ENCODE measurements at regions of chr1 and their contacts with region 1.

Region 1: GRCh38 chr1:28329395-28330153 is 734 bp downstream of the MED18 start:
- DNase-seq: peak; percentile 27 to 43 (median 28)
- H3K4me3 ChIP-seq: peak overlapping the region; percentile 65 to 82 (median 76)
- H3K4me3 Mint-ChIP-seq: peak overlapping the region; percentile 87 to 93
- H3K27ac ChIP-seq: peak overlapping the region; percentile 91 to 96
- H3K27ac Mint-ChIP-seq: peak overlapping the region; percentile 97 to 99 (median 98)
- H3K4me1 ChIP-seq: peaks cover 33 to 35% of the 10 kb centered on the region in 2 donors
- H3K4me1 Mint-ChIP-seq: peaks cover 35% of the 10 kb centered on the region
- H3K27me3 ChIP-seq: no peaks in the 10 kb centered on the region
- H3K27me3 Mint-ChIP-seq: peaks cover 0 to 6% (median 1%) of the 10 kb centered on the region in 3 donors
- CTCF ChIP-seq: no peak

Region 2: GRCh38 chr1:28248283-28249012 is 81.1 kb before region 1 on chr1:
- intact Hi-C with region 1: loop called (anchors 2 to 5 kb)
- DNase-seq: peak; percentile 69 to 77 (median 76)
- H3K4me3 ChIP-seq: peak overlapping the region in 2 of 3 experiments; percentile 14 to 96
- H3K4me3 Mint-ChIP-seq: peak overlapping the region; percentile 61 to 82
- H3K27ac ChIP-seq: peak overlapping the region; percentile 75 to 89
- H3K27ac Mint-ChIP-seq: peak overlapping the region; percentile 94 to 99 (median 96)
- H3K4me1 ChIP-seq: peaks cover 66 to 69% of the 10 kb centered on the region in 2 donors
- H3K4me1 Mint-ChIP-seq: peaks cover 63% of the 10 kb centered on the region
- H3K27me3 ChIP-seq: no peaks in the 10 kb centered on the region
- H3K27me3 Mint-ChIP-seq: no peaks in the 10 kb centered on the region
- CTCF ChIP-seq: peak; percentile 97

Region 3: DNA sequence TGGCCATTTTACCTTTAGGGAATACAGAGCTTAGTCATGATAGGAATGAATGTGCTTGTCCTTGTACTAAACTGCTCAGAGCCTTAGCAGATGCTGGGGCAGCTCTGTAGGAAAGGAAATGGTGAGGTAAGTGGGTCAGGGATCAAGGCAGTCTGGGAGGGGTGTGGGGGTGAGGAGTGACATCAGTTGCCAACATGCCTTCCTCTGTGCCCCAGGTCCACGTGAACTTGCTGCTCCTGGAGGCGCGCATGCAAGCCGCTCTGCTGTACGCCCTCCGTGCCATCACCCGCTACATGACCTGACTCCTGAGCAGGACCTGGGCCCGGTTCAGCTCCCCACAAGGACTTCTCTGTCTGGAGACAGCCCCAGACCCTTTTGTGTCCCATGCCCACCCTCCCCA is 49.1 kb before region 1 on chr1:
- intact Hi-C with region 1: loop called in 1 of 2 experiments (anchors 2 kb)
- DNase-seq: no peak
- H3K4me3 ChIP-seq: no peak overlapping the region
- H3K4me3 Mint-ChIP-seq: no peak overlapping the region
- H3K27ac ChIP-seq: no peak overlapping the region
- H3K27ac Mint-ChIP-seq: peak overlapping the region in 2 of 7 donors; percentile 7 to 26
- H3K4me1 ChIP-seq: peaks cover 19 to 26% of the 10 kb centered on the region in 2 donors
- H3K4me1 Mint-ChIP-seq: peaks cover 28% of the 10 kb centered on the region
- H3K27me3 ChIP-seq: no peaks in the 10 kb centered on the region
- H3K27me3 Mint-ChIP-seq: peaks cover 0 to 4% (median 0%) of the 10 kb centered on the region in 3 donors
- CTCF ChIP-seq: no peak

Region 4: GRCh38 chr1:28378906-28379305 is 49.3 kb after region 1 on chr1:
- intact Hi-C with region 1: no loop called
- DNase-seq: no peak
- H3K4me3 ChIP-seq: no peak overlapping the region
- H3K4me3 Mint-ChIP-seq: no peak overlapping the region
- H3K27ac ChIP-seq: peak overlapping the region in 1 of 2 donors; percentile 26
- H3K27ac Mint-ChIP-seq: peak overlapping the region in 2 of 7 donors; percentile 32 to 73
- H3K4me1 ChIP-seq: peaks cover 4 to 6% of the 10 kb centered on the region in 2 donors
- H3K4me1 Mint-ChIP-seq: peaks cover 19% of the 10 kb centered on the region
- H3K27me3 ChIP-seq: no peaks in the 10 kb centered on the region
- H3K27me3 Mint-ChIP-seq: peaks cover 0 to 4% (median 0%) of the 10 kb centered on the region in 3 donors
- CTCF ChIP-seq: no peak